Breast epithelium (tissue), 4 donors: ENCODE measurements at regions of chr4 and their contacts with region 1.

Region 1: GRCh38 chr4:40178672-40179071 is 18.2 kb upstream of the RHOH start:
- DNase-seq: no peak
- H3K4me3 ChIP-seq: no peak overlapping the region
- H3K27ac ChIP-seq: no peak overlapping the region
- H3K4me1 ChIP-seq: no peaks in the 10 kb centered on the region
- H3K27me3 ChIP-seq: no peaks in the 10 kb centered on the region
- CTCF ChIP-seq: no peak
- POLR2A ChIP-seq: no peak

Region 2: DNA sequence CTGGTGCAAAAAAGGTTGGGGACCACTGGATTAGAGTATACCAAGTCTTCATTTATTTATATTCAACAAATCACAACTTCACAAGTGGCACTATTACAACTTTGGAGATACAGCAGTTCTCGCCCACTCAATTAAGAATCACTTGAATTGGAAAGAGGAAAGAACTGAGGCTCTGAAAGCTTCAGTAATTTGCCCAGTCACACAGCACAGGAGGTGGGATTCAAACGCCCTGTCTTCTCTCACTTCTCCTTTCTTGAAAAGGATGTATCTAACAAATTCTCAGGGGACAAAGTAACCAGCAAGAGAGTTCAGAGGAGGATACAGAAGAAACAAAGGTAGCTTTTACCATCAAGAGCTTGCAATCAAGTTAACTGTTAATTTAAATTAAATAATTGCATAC is 552.4 kb before region 1 on chr4:
- intact Hi-C with region 1: loop called (anchors 5 kb)
- DNase-seq: no peak
- H3K4me3 ChIP-seq: no peak overlapping the region
- H3K27ac ChIP-seq: no peak overlapping the region
- H3K4me1 ChIP-seq: no peaks in the 10 kb centered on the region
- H3K27me3 ChIP-seq: no peaks in the 10 kb centered on the region
- CTCF ChIP-seq: no peak
- POLR2A ChIP-seq: no peak

Region 3: GRCh38 chr4:41465146-41465761 is 1286.6 kb after region 1 on chr4:
- intact Hi-C with region 1: no loop called
- DNase-seq: no peak
- H3K4me3 ChIP-seq: no peak overlapping the region
- H3K27ac ChIP-seq: no peak overlapping the region
- H3K4me1 ChIP-seq: no peaks in the 10 kb centered on the region
- H3K27me3 ChIP-seq: no peaks in the 10 kb centered on the region
- CTCF ChIP-seq: no peak
- POLR2A ChIP-seq: no peak